CD8-positive, alpha-beta memory T cell (primary cell): ENCODE measurements at regions of chr2 and their contacts with region 1.

Region 1: DNA sequence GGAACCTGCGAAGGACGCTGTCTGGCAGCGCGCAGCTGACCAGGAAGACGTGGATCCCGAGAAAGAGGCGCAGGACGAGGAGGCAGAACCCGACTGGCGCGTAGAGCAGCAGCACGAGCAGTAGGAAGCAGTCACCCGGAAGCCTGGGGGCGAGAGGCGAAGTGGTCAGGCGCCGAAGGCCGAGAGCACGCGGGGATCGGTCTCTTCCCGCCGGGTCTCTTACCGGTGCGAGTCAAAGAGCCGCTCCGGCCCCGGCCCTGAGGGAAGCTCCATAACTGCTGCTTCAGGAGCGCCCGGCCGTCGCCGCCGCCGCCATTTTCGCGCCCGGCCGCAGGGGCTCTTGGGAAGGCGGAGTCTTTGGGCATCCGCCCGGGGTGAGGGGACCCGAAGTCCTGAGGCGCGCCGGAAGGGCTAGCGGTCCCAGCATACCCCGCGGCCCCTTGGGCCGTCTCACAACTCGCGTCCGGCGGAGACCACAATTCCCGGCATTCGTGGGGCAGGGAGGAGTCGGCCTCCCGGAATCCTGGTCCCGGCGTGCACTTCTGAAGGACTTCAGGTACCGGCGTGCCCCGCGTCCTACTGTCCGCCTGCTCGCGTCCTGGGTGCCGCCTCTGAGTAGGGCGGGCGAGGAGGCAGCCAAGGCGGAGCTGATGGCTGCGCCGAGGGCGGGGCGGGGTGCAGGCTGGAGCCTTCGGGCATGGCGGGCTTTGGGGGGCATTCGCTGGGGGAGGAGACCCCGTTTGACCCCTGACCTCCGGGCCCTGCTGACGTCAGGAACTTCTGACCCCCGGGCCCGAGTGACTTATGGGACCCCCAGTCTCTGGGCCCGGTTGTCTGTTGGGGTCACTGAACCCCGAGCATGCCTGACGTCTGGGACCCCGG is at the starts of genes AUP1 and HTRA2:
- DNase-seq: peak; percentile 79 to 89 (median 84)
- H3K4me3 ChIP-seq: peak within 1 kb of the TSS; percentile 94
- H3K4me3 Mint-ChIP-seq: peak within 1 kb of the TSS; percentile 87 to 97 (median 95)
- H3K27ac ChIP-seq: peak within 1 kb of the TSS; percentile 86
- H3K27ac Mint-ChIP-seq: peak within 1 kb of the TSS; percentile 51 to 98 (median 95)
- H3K4me1 ChIP-seq: peaks cover 28% of the 10 kb centered on the region
- H3K4me1 Mint-ChIP-seq: peaks cover 32 to 44% (median 38%) of the 10 kb centered on the region in 3 donors
- H3K27me3 ChIP-seq: no peaks in the 10 kb centered on the region
- H3K27me3 Mint-ChIP-seq: peaks cover 0 to 2% of the 10 kb centered on the region in 2 donors
- total RNA-seq, gene AUP1: 219 to 225 TPM
- total RNA-seq, gene HTRA2: 81.0 to 82.1 TPM

Region 2: GRCh38 chr2:74507145-74507925 is 22.3 kb before region 1 on chr2 and contains the start of gene PCGF1:
- CTCF ChIA-PET with region 1: interaction called, 7 read pairs
- POLR2A ChIA-PET with region 1: interaction called, 10 read pairs
- DNase-seq: peak; percentile 97 to 99 (median 98)
- H3K4me3 ChIP-seq: peak within 1 kb of the TSS; percentile 100
- H3K4me3 Mint-ChIP-seq: peak within 1 kb of the TSS; percentile 95 to 100 (median 100)
- H3K27ac ChIP-seq: peak within 1 kb of the TSS; percentile 96
- H3K27ac Mint-ChIP-seq: peak within 1 kb of the TSS; percentile 95 to 100 (median 100)
- H3K4me1 ChIP-seq: peaks cover 38% of the 10 kb centered on the region
- H3K4me1 Mint-ChIP-seq: peaks cover 40 to 63% (median 59%) of the 10 kb centered on the region in 3 donors
- H3K27me3 ChIP-seq: peaks cover 9% of the 10 kb centered on the region
- H3K27me3 Mint-ChIP-seq: peaks cover 31 to 57% of the 10 kb centered on the region in 2 donors
- total RNA-seq, gene PCGF1: 29.6 to 38.7 TPM

Region 3: DNA sequence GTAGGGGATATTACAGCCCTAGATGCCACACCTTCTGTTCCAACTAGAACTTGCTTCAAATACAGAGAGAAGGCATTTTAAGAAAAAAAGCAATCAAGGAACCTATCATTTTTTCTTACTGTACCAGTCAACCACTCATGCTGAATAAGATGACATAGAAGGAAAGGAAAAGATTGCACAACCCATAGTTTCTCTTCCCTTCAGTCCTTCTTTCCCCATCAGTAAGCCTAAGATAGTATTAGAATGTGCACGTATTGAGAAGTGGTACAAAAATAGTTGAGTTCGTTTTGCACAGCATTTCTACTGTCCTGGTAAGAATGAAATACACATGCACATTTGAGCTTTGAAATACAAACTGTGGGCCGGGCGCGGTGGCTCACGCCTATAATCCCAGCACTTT is 277.3 kb after region 1 on chr2:
- CTCF ChIA-PET with region 1: no interaction called
- POLR2A ChIA-PET with region 1: no interaction called
- DNase-seq: no peak
- H3K4me3 ChIP-seq: no peak overlapping the region
- H3K4me3 Mint-ChIP-seq: no peak overlapping the region
- H3K27ac ChIP-seq: no peak overlapping the region
- H3K27ac Mint-ChIP-seq: no peak overlapping the region
- H3K4me1 ChIP-seq: no peaks in the 10 kb centered on the region
- H3K4me1 Mint-ChIP-seq: no peaks in the 10 kb centered on the region
- H3K27me3 ChIP-seq: no peaks in the 10 kb centered on the region
- H3K27me3 Mint-ChIP-seq: peaks cover 0 to 23% of the 10 kb centered on the region in 2 donors

Region 4: DNA sequence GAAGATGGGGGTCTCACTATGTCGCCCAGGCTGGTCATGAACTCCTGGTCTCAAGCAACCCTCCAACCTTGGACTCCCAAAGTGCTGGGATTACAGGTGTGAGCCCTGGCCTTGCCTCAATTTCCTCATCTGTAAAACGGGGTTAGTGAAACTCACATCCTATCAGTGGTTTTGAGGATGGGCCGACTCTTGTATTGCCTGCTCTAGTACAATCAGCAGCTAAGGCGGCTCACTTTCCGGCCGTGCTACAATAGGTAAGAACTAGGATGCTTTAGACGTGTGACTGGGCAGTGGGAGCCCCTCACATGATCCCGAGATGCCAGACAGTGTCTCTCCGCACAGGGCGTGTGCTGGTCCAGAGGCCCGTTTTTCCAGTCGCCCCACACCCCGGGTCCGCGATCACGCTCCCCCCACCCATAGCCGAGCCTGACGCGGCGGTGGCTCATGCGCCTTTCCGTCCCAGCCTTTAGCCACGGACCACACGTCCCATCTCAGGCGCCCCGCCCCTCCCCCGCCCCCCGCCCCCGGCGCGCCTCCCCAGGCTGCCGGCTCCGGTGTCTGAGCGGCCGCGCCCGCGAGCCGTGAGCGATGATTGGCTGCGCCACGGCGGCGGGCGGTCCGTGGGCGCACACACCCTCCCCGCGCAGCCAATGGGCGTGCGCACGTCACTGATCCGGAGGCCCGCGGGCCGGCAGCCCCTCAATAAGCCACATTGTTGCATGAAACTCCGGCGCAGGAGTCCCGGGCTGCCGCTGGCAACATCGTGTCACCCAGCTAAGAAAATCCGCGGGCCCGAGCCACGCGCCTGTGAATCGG is 304.0 kb after region 1 on chr2 and contains the start of gene HK2:
- CTCF ChIA-PET with region 1: no interaction called
- POLR2A ChIA-PET with region 1: no interaction called
- DNase-seq: peak; percentile 51 to 83 (median 70)
- H3K4me3 ChIP-seq: peak within 1 kb of the TSS; percentile 61
- H3K4me3 Mint-ChIP-seq: peak within 1 kb of the TSS; percentile 85 to 93 (median 88)
- H3K27ac ChIP-seq: peak within 1 kb of the TSS; percentile 26
- H3K27ac Mint-ChIP-seq: peak within 1 kb of the TSS in 6 of 8 donors; percentile 7 to 88 (median 76)
- H3K4me1 ChIP-seq: peaks cover 15% of the 10 kb centered on the region
- H3K4me1 Mint-ChIP-seq: peaks cover 25 to 32% (median 31%) of the 10 kb centered on the region in 3 donors
- H3K27me3 ChIP-seq: no peaks in the 10 kb centered on the region
- H3K27me3 Mint-ChIP-seq: peaks cover 12 to 35% of the 10 kb centered on the region in 2 donors
- total RNA-seq, gene HK2: 54.5 to 57.0 TPM